GM12878 (cell line): ENCODE measurements at regions of chr3 and their contacts with region 1.

Region 1: GRCh38 chr3:132722164-132723024 is at the start of gene NPHP3:
- DNase-seq: peak; percentile 67
- ATAC-seq: peak; percentile 93
- H3K4me3 ChIP-seq: peak within 1 kb of the TSS; percentile 85
- H3K27ac ChIP-seq: peak within 1 kb of the TSS; percentile 50
- H3K4me1 ChIP-seq: no peaks in the 10 kb centered on the region
- H3K27me3 ChIP-seq: no peaks in the 10 kb centered on the region
- CTCF ChIP-seq: no peak
- EP300 ChIP-seq: no peak
- POLR2A ChIP-seq: peak; percentile 88
- RAD21 ChIP-seq: no peak
- polyA plus RNA-seq, gene NPHP3: 0.84 to 0.95 TPM

Region 2: GRCh38 chr3:132738314-132738713 is 15.9 kb after region 1 on chr3:
- CTCF ChIA-PET with region 1: interaction called, 19 read pairs
- POLR2A ChIA-PET with region 1: no interaction called
- RAD21 ChIA-PET with region 1: interaction called, 3 read pairs
- SMC1A ChIA-PET with region 1: no interaction called
- in situ Hi-C with region 1: no loop called
- intact Hi-C with region 1: no loop called
- DNase-seq: no peak
- ATAC-seq: no peak
- H3K4me3 ChIP-seq: no peak overlapping the region
- H3K27ac ChIP-seq: no peak overlapping the region
- H3K4me1 ChIP-seq: no peaks in the 10 kb centered on the region
- H3K27me3 ChIP-seq: no peaks in the 10 kb centered on the region; a peak in 2 of 4 replicates
- CTCF ChIP-seq: no peak
- EP300 ChIP-seq: no peak
- POLR2A ChIP-seq: no peak
- RAD21 ChIP-seq: no peak

Region 3: GRCh38 chr3:133295199-133295901 is 573.0 kb after region 1 on chr3:
- CTCF ChIA-PET with region 1: no interaction called
- POLR2A ChIA-PET with region 1: no interaction called
- RAD21 ChIA-PET with region 1: no interaction called
- SMC1A ChIA-PET with region 1: no interaction called
- in situ Hi-C with region 1: no loop called
- intact Hi-C with region 1: loop called (anchors 10 kb)
- DNase-seq: peak; percentile 19
- ATAC-seq: peak; percentile 90
- H3K4me3 ChIP-seq: no peak overlapping the region
- H3K27ac ChIP-seq: no peak overlapping the region
- H3K4me1 ChIP-seq: no peaks in the 10 kb centered on the region; the same call in 1 of the 2 replicates
- H3K27me3 ChIP-seq: no peaks in the 10 kb centered on the region; a peak in 1 of 4 replicates
- CTCF ChIP-seq: no peak
- EP300 ChIP-seq: no peak
- POLR2A ChIP-seq: no peak
- RAD21 ChIP-seq: no peak

Region 4: GRCh38 chr3:133426721-133427120 is 704.3 kb after region 1 on chr3:
- CTCF ChIA-PET with region 1: interaction called, 19 read pairs
- POLR2A ChIA-PET with region 1: no interaction called
- RAD21 ChIA-PET with region 1: no interaction called
- SMC1A ChIA-PET with region 1: interaction called, 3 read pairs
- in situ Hi-C with region 1: loop called (anchors 5 kb)
- intact Hi-C with region 1: loop called (anchors 2 kb)
- DNase-seq: no peak
- ATAC-seq: no peak
- H3K4me3 ChIP-seq: no peak overlapping the region
- H3K27ac ChIP-seq: no peak overlapping the region
- H3K4me1 ChIP-seq: peaks cover 5% of the 10 kb centered on the region; the same call in 1 of the 2 replicates
- H3K27me3 ChIP-seq: peaks cover 0 to 4% of the 10 kb centered on the region in 2 experiments; a peak in 1 of 4 replicates
- CTCF ChIP-seq: no peak
- EP300 ChIP-seq: no peak
- POLR2A ChIP-seq: no peak
- RAD21 ChIP-seq: no peak

Region 5: GRCh38 chr3:133812872-133813271 is 1090.5 kb after region 1 on chr3:
- CTCF ChIA-PET with region 1: interaction called, 3 read pairs
- POLR2A ChIA-PET with region 1: no interaction called
- RAD21 ChIA-PET with region 1: no interaction called
- SMC1A ChIA-PET with region 1: no interaction called
- in situ Hi-C with region 1: no loop called
- intact Hi-C with region 1: loop called (anchors 5 kb)
- DNase-seq: no peak
- ATAC-seq: no peak
- H3K4me3 ChIP-seq: no peak overlapping the region
- H3K27ac ChIP-seq: no peak overlapping the region
- H3K4me1 ChIP-seq: no peaks in the 10 kb centered on the region
- H3K27me3 ChIP-seq: no peaks in the 10 kb centered on the region
- CTCF ChIP-seq: no peak
- EP300 ChIP-seq: no peak
- POLR2A ChIP-seq: no peak
- RAD21 ChIP-seq: no peak